ENCODE measurements at regions of chr13 and their contacts with region 1.

Region 1: GRCh38 chr13:31742097-31742734 is 2.9 kb downstream of the RXFP2 start:
- DNase-seq: peak; percentile 28 to 55
- ATAC-seq: peak; percentile 77

Region 2: DNA sequence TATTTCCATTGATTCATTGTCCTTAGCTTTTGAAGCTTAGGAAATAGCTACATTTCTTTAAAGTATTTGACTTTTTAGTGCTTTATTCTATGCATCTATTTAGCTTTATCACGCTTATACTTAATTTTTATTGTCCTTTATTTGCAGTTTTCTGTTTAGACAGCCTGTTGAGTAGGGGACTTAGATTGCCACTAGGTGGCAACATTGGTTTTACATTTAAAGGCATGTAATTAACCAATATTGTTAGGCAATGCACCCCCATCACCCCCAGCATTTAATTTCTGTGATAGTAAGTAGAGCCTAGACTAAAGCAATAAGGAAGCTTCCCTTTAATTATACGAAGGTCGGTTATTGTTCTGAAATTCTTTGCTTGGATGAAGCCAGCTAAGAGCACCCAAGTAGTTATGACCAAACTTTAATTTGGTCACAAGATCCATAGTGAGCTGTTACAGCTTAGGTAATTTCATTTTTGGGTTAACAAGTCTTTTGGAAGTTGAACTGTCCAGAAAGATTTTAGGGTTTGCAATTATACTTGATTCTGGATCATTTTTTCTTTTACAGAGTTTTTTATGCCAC is 505.9 kb before region 1 on chr13:
- intact Hi-C with region 1: loop called in 1 of 2 experiments (anchors 10 kb)
- DNase-seq: no peak
- ATAC-seq: peak; percentile 82

Region 3: DNA sequence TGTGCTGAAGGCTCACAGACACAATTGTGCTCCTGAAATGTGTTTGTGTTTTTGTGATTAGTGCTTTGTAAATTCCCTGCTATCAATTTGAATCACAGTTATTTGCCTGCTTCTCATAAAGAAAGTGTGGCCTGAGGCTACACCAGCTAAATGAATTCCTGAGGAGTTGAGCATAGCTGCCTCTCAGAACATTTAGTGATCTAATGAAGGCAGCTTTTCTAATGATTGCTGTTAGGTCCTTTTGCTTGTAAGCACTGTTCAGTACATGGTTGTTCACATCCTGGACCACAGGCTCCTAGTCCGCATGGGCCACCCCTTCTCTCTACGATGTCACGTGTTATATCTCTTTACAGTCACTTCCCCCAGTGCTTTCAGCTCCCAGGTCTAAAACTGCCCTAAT is 304.2 kb before region 1 on chr13:
- intact Hi-C with region 1: loop called in 1 of 2 experiments (anchors 5 kb)
- DNase-seq: no peak
- ATAC-seq: no peak

Region 4: DNA sequence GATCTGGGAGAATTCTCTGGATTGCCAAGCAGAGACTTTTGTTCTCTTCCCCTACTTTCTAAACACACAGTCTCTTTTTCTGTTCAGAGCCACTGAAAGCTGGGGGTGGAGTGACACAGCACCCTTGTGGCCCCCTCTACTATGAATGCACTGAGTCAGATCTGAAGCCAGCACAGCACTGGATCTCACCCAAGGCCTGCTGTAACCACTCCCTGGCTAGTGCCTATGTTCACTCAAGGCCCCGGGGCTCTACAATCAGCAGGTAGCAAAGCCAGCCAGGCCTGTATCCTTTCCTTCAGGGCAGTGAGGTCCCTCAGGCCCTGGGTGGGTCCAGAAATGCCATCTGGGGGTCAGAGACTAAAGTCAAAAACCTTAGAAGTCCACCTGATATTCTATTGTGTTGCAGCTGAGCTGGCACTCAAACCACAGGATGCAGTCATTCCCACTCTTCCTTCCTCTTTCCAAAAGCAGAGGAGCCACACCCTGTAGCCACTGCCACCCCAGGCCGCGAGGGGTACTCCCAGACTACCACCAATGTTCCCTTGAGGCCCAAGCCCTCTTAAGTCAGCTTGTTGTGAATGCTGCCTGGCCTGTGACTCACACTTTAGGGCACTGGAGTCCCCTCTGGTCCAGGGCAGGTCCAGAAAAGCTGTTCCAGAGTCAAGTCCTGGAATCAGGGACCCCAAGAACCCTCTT is 113.0 kb before region 1 on chr13:
- intact Hi-C with region 1: no loop called
- DNase-seq: no peak
- ATAC-seq: no peak